Endothelial cell of umbilical vein (primary cell): ENCODE measurements at regions of chr7 and their contacts with region 1.

Region 1: GRCh38 chr7:44973610-44974401 is 5.0 kb downstream of the MYO1G start:
- DNase-seq: peak; percentile 39
- H3K4me3 ChIP-seq: no peak overlapping the region
- H3K27ac ChIP-seq: no peak overlapping the region
- H3K4me1 ChIP-seq: no peaks in the 10 kb centered on the region
- H3K27me3 ChIP-seq: no peaks in the 10 kb centered on the region
- CTCF ChIP-seq: peak; percentile 55 to 73
- POLR2A ChIP-seq: no peak

Region 2: DNA sequence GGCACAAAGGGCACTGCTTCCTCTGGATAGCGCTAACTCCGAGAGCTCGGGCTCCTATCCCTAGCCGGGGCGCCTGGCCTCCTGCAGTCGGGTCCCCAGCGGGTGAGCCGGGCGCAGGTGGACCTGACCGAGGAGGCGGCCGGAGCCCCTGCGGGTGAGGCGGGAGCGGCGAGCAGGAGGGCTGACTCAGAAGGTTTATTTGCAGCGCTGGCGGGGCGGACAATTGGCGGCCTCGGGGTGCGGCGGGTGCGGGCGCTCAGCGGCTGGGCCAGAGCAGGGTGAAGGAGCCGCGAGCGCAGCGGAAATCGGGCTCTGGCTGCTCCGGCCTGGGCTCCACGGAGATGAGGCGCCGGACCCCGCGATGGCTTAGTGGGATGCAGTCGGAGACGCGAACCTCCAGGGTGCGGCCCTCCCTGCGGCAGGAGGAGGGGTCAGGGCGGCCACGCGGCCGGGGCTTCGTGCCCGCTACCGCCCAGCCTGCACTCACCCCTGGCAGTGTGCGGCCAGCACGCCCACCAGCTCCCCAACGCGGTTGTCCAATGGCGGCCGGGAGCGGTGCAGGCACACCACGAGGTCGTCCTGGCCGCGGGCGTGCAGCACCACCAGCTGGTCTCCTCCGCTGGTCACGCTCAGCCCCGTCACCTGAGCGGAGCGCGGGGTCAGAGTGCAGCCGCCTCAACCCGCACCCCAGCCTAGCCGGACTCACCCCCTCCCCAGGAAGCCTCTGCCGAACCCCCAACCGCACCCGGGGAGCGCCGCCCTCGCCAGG is 11.1 kb before region 1 on chr7:
- CTCF ChIA-PET with region 1: interaction called, 40 read pairs
- POLR2A ChIA-PET with region 1: no interaction called
- dilution Hi-C with region 1: no loop called
- intact Hi-C with region 1: no loop called
- DNase-seq: peak; percentile 27
- H3K4me3 ChIP-seq: peak overlapping the region in 2 of 3 experiments; percentile 27 to 31
- H3K27ac ChIP-seq: no peak overlapping the region
- H3K4me1 ChIP-seq: peaks cover 3% of the 10 kb centered on the region
- H3K27me3 ChIP-seq: peaks cover 2 to 4% of the 10 kb centered on the region in 2 experiments
- CTCF ChIP-seq: no peak
- POLR2A ChIP-seq: no peak

Region 3: DNA sequence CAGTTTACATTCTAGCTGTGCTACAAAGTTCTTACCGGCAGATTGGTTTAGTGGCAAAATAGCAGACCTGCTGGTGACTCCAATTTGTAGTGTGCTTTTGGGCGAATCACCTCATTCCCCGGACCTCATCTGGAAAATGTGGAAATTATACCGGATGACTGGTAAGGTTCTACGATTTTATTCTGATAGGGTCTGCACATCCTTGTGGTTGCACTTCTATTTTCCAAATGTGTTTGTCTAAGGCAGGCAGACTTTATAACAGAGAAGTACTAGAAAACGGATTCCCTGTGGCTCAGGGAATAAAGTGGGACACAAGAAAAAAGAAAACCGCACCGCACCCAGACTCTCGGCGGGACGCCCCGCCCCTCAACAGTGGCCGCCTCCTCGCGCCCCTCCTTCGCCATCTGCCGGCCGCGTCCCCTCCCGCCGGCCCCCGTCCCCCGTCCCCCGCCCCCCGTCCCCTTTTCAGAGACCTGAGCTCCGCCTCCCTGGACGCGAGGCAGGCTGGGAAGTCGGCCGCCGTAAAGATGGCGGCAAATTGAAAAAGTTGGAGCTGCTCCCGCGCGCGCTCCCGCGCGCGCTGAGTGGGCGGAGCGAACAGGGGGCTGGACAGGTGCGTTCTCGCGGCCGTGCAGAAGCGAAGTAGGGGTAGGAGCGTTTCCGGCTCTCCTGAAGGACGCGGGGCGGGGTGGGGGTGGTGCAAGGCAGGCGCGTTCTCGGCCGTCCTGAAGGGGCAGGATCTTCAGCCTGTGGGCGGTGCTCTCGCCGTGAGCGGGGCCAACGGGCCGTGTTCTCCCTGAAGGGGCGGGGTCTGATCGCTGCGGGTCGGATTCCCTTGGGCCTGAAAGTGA is 25.7 kb after region 1 on chr7:
- CTCF ChIA-PET with region 1: interaction called, 127 read pairs
- POLR2A ChIA-PET with region 1: interaction called, 7 read pairs
- dilution Hi-C with region 1: no loop called
- intact Hi-C with region 1: loop called (anchors 1 kb)
- DNase-seq: peak; percentile 100
- H3K4me3 ChIP-seq: peak overlapping the region; percentile 57 to 97 (median 96)
- H3K27ac ChIP-seq: peak overlapping the region; percentile 79
- H3K4me1 ChIP-seq: peaks cover 31% of the 10 kb centered on the region
- H3K27me3 ChIP-seq: no peaks in the 10 kb centered on the region
- CTCF ChIP-seq: no peak
- POLR2A ChIP-seq: peak; percentile 66

Region 4: GRCh38 chr7:45026984-45027773 is 53.4 kb after region 1 on chr7:
- CTCF ChIA-PET with region 1: interaction called, 13 read pairs
- POLR2A ChIA-PET with region 1: no interaction called
- dilution Hi-C with region 1: no loop called
- intact Hi-C with region 1: no loop called
- DNase-seq: peak; percentile 31
- H3K4me3 ChIP-seq: no peak overlapping the region
- H3K27ac ChIP-seq: peak overlapping the region; percentile 3
- H3K4me1 ChIP-seq: peaks cover 15% of the 10 kb centered on the region
- H3K27me3 ChIP-seq: no peaks in the 10 kb centered on the region
- CTCF ChIP-seq: no peak
- POLR2A ChIP-seq: no peak

Region 5: DNA sequence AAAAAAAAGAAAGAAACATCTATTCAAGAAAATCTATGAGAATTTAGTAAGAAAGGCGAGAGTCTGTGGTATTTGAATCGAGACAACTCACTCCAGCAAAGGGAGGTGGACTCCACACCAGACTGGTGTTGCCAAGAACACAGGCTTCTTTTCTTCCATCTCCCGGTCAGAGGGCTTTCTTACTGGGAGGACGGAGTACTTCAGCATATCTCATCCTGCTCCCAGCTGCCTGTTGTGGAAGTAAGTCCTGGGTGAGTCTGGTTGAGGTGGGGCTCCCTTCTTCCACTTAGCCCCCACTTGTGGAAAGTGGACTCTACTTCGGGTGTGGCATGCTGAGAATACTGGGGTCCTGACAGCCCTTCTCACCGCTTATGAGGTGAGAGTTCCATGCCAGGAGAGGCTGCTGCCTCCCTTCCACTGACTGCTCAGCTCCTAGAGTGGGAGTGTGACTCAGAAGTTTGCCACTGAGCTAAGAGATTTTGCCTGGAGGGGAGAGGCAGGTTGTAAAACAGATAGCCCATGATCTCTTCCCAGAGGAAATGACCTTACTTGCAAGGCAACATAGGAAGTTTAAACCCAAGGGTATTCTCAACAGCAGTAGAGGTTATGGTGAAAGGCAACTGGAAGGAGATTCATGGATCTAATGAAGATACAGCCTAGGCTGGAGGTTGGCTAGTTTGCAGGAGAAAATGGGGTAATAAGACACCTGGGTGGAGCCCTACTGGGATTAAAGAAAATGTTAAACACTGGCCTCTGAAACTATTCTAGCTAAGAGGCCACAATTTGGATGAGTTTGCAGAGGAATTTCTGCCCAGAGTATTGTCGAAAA is 118.5 kb after region 1 on chr7:
- CTCF ChIA-PET with region 1: interaction called, 10 read pairs
- POLR2A ChIA-PET with region 1: no interaction called
- dilution Hi-C with region 1: no loop called
- intact Hi-C with region 1: no loop called
- DNase-seq: no peak
- H3K4me3 ChIP-seq: no peak overlapping the region
- H3K27ac ChIP-seq: no peak overlapping the region
- H3K4me1 ChIP-seq: no peaks in the 10 kb centered on the region
- H3K27me3 ChIP-seq: peaks cover 3 to 11% of the 10 kb centered on the region in 2 experiments
- CTCF ChIP-seq: no peak
- POLR2A ChIP-seq: no peak

Region 6: DNA sequence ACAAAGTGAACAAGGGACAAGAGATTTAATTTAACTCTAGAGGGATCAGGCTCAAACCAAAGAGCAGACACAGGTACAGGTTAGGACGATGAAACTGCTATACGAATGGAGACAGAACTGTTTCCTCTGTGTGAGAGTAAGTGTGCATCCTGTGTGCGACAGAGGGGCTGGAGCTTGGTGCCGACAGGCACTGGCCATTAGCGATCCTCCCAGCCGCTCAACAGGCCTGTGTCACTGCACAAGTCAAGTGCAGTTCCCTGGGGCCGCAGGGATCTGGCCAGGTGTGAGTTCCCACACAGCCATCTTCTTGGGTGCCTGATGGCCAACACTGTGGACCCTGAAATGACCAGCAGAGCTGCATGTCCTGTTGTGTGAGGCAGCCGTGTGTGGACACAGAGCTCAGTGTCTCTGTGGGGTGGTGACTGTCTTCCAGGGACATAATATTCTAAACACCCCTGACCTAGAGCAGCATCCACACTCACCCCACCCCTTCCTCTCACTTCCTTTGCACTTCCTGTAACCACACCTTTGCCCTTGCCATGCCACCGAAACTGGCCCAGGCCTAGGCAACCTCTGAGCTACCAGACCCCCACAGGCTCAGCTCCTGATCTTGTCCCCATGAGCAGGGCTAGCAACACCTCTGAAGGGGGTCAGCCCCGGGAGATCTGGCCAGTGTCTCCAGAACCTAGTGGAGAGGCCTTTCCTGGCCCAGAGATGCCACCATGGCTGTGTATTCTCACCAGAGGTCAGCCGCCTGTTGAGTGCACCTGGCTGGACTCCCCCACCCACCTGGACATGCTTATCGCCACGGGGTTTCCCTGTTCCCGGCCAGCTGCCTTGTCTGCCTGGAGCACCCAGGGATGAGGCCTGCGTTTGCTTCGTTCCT is 149.4 kb after region 1 on chr7:
- CTCF ChIA-PET with region 1: interaction called, 12 read pairs
- POLR2A ChIA-PET with region 1: no interaction called
- dilution Hi-C with region 1: no loop called
- intact Hi-C with region 1: no loop called
- DNase-seq: no peak
- H3K4me3 ChIP-seq: no peak overlapping the region
- H3K27ac ChIP-seq: no peak overlapping the region
- H3K4me1 ChIP-seq: no peaks in the 10 kb centered on the region
- H3K27me3 ChIP-seq: no peaks in the 10 kb centered on the region
- CTCF ChIP-seq: no peak
- POLR2A ChIP-seq: no peak

Region 7: DNA sequence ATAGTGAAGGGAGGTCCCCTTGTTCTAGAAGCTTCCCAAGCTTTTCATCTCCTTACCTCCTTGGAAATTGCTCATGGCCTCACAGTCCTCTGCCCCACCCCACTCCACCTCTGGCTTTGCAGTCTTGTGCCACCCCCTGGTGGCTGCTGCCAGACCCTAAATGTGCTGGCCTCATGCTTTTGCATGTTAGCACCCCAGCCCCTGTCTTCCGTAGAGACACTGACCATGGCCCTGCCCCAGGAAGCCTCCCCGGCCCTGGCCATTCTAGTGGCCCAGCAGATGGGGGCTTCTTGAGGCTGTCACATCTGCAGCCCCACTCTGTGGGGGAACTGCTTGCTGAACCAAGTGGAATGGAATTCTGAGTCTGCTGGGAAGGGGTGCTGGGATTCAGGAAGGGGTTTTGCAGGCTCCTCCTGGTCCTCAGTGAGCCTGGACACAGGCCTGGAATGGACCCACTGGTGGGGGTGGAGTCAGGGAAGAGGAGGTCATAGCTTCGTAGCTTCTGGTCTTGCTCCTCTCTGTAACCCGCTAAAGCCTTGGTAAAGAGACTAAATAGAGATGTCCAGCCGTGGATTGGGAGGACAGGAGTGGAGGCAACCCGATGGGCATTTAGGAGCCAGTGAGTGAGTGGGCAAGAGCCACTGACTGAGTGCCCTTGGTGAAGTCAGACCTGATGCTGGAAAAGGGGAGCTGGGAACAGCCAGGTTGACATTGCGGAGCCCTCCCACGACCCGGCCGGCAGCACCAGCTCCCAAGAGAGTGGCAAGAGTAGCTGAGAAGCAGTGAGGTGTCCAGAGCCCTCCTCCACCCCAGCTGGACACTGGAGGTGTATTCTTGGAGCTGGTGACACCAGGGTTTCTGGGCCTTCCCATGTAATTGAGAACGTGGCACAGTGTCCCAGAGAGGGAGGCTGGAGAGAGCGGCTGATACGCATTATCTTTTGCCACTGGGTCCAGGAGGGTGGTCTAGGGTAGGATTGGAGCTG is 204.7 kb after region 1 on chr7:
- CTCF ChIA-PET with region 1: no interaction called
- POLR2A ChIA-PET with region 1: no interaction called
- dilution Hi-C with region 1: no loop called
- intact Hi-C with region 1: no loop called
- DNase-seq: no peak
- H3K4me3 ChIP-seq: no peak overlapping the region
- H3K27ac ChIP-seq: no peak overlapping the region
- H3K4me1 ChIP-seq: no peaks in the 10 kb centered on the region
- H3K27me3 ChIP-seq: no peaks in the 10 kb centered on the region
- CTCF ChIP-seq: peak in 1 of 2 donors; percentile 2
- POLR2A ChIP-seq: no peak